Calu3 (cell line): ENCODE measurements at regions of chr17 and their contacts with region 1.

Region 1: DNA sequence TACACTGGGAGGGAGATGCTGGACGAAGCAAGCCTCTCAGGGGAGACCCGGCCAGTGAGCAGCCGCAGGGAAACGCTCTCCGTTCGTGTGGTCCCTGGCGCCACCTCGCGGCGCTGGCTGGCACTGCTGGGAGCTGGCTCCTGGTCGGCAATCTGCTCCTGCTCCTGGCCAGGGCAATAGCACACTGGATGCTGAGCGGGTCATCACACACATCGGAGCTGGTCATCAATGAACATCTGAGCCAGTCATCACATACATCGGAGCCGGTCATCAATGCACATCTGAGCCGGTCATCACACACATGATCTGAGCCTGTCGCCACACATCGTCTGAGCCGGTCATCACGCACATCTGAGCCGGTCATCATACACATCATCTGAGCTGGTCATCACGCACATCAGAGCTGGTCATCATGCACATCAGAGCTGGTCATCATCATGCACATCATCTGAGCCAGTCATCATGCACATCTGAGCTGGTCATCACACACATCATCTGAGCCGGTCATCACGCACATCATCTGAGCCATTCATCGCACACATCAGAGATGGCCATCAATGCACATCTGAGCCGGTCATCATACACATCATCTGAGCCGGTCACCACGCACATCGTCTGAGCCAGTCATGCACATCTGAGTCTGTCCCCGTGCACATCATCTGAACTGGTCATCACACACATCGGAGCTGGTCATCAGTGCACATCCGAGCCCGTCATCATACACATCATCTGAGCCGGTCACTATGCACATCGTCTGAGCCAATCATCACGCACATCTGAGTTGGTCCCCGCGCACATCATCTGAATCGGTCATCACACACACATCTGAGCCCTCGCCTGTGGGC is 217.3 kb downstream of the RBFOX3 start:
- DNase-seq: peak; percentile 90
- H3K4me3 Mint-ChIP-seq: no peak overlapping the region
- H3K27ac Mint-ChIP-seq: no peak overlapping the region
- H3K4me1 Mint-ChIP-seq: no peaks in the 10 kb centered on the region
- H3K27me3 Mint-ChIP-seq: peaks cover 98% of the 10 kb centered on the region
- CTCF ChIP-seq: peak; percentile 88

Region 2: GRCh38 chr17:79087428-79088143 is 306.0 kb before region 1 on chr17:
- CTCF ChIA-PET with region 1: interaction called, 29 read pairs
- intact Hi-C with region 1: loop called (anchors 2 kb)
- DNase-seq: peak; percentile 84
- H3K4me3 Mint-ChIP-seq: no peak overlapping the region
- H3K27ac Mint-ChIP-seq: no peak overlapping the region
- H3K4me1 Mint-ChIP-seq: no peaks in the 10 kb centered on the region
- H3K27me3 Mint-ChIP-seq: peaks cover 9% of the 10 kb centered on the region
- CTCF ChIP-seq: peak; percentile 90

Region 3: DNA sequence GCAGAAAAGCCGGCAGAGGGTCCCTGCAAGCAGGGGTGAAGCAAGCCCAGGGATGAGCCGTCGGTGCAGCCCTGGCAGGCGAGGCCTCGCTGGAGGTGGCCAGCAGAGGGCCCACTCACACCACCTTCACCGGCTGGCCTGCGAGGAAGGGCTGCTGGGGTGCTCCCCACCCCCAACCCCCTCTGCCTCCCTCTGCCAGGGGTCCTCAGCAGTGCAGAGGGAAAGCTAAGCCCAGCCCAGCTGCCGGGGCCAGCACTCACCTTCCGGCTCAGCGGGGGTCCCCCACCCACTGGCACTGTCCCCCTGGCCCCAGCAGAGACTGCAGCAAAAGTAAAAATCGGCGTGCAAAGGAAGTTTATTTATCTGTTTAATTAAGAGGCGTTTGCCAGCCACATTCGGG is 205.5 kb before region 1 on chr17:
- CTCF ChIA-PET with region 1: interaction called, 12 read pairs
- intact Hi-C with region 1: loop called (anchors 2 kb)
- DNase-seq: peak; percentile 56
- H3K4me3 Mint-ChIP-seq: no peak overlapping the region
- H3K27ac Mint-ChIP-seq: no peak overlapping the region
- H3K4me1 Mint-ChIP-seq: no peaks in the 10 kb centered on the region
- H3K27me3 Mint-ChIP-seq: peaks cover 100% of the 10 kb centered on the region
- CTCF ChIP-seq: peak; percentile 54